IMR-90 (cell line): ENCODE measurements at regions of chr6 and their contacts with region 1.

Region 1: DNA sequence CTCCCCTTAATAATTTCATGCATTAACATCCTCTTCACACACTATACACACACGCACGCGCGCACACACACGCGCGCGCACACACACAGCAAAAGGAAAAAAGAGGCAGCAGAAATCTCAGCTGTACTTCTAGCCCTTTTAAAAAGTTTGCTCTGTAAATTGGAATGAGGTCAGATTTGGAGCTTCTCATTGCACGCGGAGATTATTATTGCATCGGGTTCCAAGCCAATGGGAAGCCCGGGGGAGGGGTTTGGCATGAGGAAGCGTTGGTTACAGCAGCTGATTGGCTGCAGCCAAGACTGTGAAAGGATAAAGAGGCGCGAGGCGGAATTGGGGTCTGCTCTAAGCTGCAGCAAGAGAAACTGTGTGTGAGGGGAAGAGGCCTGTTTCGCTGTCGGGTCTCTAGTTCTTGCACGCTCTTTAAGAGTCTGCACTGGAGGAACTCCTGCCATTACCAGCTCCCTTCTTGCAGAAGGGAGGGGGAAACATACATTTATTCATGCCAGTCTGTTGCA is at the start of gene SOX4:
- DNase-seq: peak; percentile 98
- ATAC-seq: peak; percentile 79
- H3K4me3 ChIP-seq: peak within 1 kb of the TSS; percentile 84
- H3K27ac ChIP-seq: peak within 1 kb of the TSS; percentile 90
- H3K4me1 ChIP-seq: no peaks in the 10 kb centered on the region
- H3K27me3 ChIP-seq: no peaks in the 10 kb centered on the region
- CTCF ChIP-seq: no peak
- POLR2A ChIP-seq: peak; percentile 98
- RAD21 ChIP-seq: no peak; the same call in 1 of the 2 replicates
- total RNA-seq, gene SOX4: 4.7 and 6.4 TPM in 2 replicates

Region 2: DNA sequence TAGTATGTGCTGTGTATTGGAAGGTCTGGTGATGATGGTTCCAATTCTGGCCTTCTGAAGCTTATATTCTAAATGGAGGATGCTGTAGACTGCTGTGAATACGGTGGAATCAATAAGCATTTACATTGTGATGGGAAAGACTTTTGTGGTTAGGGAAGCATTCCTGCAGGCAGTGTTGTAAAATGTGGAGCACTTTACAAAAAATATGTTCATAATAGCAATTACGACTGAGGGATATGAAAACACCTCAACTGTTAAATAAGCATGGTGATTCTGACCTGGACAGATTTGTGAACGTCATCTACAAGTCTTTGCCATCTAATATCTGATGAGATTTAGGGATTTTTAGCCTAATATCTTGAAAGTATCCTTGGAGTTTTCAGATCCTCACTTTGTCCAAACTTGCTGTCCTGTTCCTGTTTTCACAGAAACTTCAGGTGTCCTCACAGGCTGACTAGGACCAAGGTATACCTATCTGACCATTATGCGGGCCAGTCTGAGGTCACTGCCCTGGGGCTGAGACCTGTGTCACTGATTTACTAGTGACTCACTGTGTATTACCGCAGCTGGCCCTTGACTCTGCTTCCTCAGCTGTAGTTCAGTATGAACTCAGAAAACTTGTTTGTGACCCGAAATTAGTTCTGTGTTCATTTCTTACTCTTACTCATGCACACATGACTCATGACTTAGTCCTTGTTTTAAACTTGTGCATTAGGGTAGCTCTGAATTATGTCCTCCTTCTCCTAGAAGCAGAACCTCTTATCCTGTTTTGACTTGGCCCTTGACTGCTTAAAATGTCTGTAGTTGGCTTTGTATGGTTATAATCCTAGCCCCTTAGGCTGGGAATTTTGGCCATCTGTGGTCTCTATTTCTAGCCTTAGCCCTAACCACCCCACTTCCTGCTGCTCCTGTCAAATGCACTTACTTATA is 716.2 kb before region 1 on chr6:
- CTCF ChIA-PET with region 1: interaction called, 11 read pairs
- POLR2A ChIA-PET with region 1: no interaction called
- dilution Hi-C with region 1: no loop called
- in situ Hi-C with region 1: loop called (anchors 5 kb)
- intact Hi-C with region 1: loop called (anchors 1 kb)
- DNase-seq: peak; percentile 97
- ATAC-seq: peak; percentile 85
- H3K4me3 ChIP-seq: no peak overlapping the region
- H3K27ac ChIP-seq: peak overlapping the region; percentile 90
- H3K4me1 ChIP-seq: peaks cover 7% of the 10 kb centered on the region
- H3K27me3 ChIP-seq: no peaks in the 10 kb centered on the region
- CTCF ChIP-seq: no peak
- POLR2A ChIP-seq: no peak
- RAD21 ChIP-seq: peak; percentile 25; the same call in 1 of the 2 replicates

Region 3: DNA sequence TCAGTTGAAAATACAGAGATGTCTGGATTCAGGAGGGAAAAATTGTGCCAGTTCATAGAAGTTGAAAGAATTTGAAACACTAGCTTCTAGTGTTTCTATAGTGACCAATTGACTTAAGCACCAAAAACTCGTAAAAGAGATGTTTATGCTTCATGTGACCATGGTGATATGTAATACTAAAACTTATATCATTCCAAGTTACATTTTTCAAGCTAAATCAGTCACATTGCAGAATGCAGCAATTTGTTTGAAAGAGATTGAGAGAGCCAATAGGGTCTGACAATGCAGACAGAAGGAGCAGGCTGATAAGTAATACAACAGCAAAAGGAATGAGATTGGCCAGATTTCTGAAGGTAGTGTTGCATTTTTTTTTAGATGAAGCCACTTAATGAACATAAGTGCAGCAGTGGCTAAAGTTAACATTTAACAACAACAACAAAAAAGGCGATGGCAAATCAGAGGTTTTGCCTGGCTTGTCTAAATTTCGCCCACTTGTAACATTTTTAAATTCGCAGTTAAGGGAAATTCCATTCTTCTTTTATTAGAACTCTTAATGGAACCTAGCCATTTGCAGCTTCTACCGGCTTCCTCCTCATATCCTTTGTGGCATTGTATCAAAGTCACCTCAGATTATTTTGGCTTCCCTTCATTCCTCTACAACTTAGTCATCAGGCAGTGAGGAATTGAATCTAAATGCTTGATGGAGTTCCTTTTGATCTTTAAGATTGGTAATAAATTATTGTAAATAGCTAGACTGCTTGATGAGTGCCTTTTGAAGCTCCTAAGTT is 483.9 kb before region 1 on chr6:
- CTCF ChIA-PET with region 1: no interaction called
- POLR2A ChIA-PET with region 1: no interaction called
- dilution Hi-C with region 1: no loop called
- in situ Hi-C with region 1: no loop called
- intact Hi-C with region 1: loop called (anchors 10 kb)
- DNase-seq: peak; percentile 59
- ATAC-seq: peak; percentile 57
- H3K4me3 ChIP-seq: no peak overlapping the region
- H3K27ac ChIP-seq: no peak overlapping the region
- H3K4me1 ChIP-seq: peaks cover 6% of the 10 kb centered on the region
- H3K27me3 ChIP-seq: no peaks in the 10 kb centered on the region
- CTCF ChIP-seq: no peak
- POLR2A ChIP-seq: no peak
- RAD21 ChIP-seq: no peak

Region 4: GRCh38 chr6:21227486-21227885 is 366.0 kb before region 1 on chr6:
- CTCF ChIA-PET with region 1: no interaction called
- POLR2A ChIA-PET with region 1: no interaction called
- dilution Hi-C with region 1: no loop called
- in situ Hi-C with region 1: no loop called
- intact Hi-C with region 1: no loop called
- DNase-seq: peak; percentile 54
- ATAC-seq: 0 out of 2 replicates have a peak, but pooled peaks have one; percentile 32
- H3K4me3 ChIP-seq: no peak overlapping the region
- H3K27ac ChIP-seq: no peak overlapping the region
- H3K4me1 ChIP-seq: peaks cover 6% of the 10 kb centered on the region
- H3K27me3 ChIP-seq: no peaks in the 10 kb centered on the region
- CTCF ChIP-seq: no peak
- POLR2A ChIP-seq: no peak
- RAD21 ChIP-seq: no peak

Region 5: GRCh38 chr6:21769405-21769861 is 176.0 kb after region 1 on chr6:
- CTCF ChIA-PET with region 1: interaction called, 3 read pairs
- POLR2A ChIA-PET with region 1: interaction called, 3 read pairs
- dilution Hi-C with region 1: no loop called
- in situ Hi-C with region 1: no loop called
- intact Hi-C with region 1: loop called (anchors 5 kb)
- DNase-seq: peak; percentile 98
- ATAC-seq: peak; percentile 84
- H3K4me3 ChIP-seq: no peak overlapping the region
- H3K27ac ChIP-seq: peak overlapping the region; percentile 41; the same call in 1 of the 2 replicates
- H3K4me1 ChIP-seq: peaks cover 6% of the 10 kb centered on the region
- H3K27me3 ChIP-seq: no peaks in the 10 kb centered on the region
- CTCF ChIP-seq: no peak
- POLR2A ChIP-seq: peak; percentile 68; the same call in 1 of the 2 replicates
- RAD21 ChIP-seq: no peak

Region 6: GRCh38 chr6:21987501-21987957 is 394.1 kb after region 1 on chr6:
- CTCF ChIA-PET with region 1: no interaction called
- POLR2A ChIA-PET with region 1: interaction called, 3 read pairs
- dilution Hi-C with region 1: no loop called
- in situ Hi-C with region 1: no loop called
- intact Hi-C with region 1: loop called (anchors 2 kb)
- DNase-seq: peak; percentile 97
- ATAC-seq: peak; percentile 93
- H3K4me3 ChIP-seq: peak overlapping the region; percentile 5; the same call in 1 of the 2 replicates
- H3K27ac ChIP-seq: peak overlapping the region; percentile 83
- H3K4me1 ChIP-seq: peaks cover 4% of the 10 kb centered on the region
- H3K27me3 ChIP-seq: no peaks in the 10 kb centered on the region
- CTCF ChIP-seq: no peak
- POLR2A ChIP-seq: peak; percentile 70
- RAD21 ChIP-seq: peak; percentile 29

Region 7: GRCh38 chr6:22613695-22614094 is 1020.2 kb after region 1 on chr6:
- CTCF ChIA-PET with region 1: no interaction called
- POLR2A ChIA-PET with region 1: no interaction called
- dilution Hi-C with region 1: no loop called
- in situ Hi-C with region 1: no loop called
- intact Hi-C with region 1: loop called (anchors 5 kb)
- DNase-seq: peak; percentile 98
- ATAC-seq: peak; percentile 96
- H3K4me3 ChIP-seq: no peak overlapping the region
- H3K27ac ChIP-seq: no peak overlapping the region
- H3K4me1 ChIP-seq: peaks cover 9% of the 10 kb centered on the region
- H3K27me3 ChIP-seq: no peaks in the 10 kb centered on the region
- CTCF ChIP-seq: no peak
- POLR2A ChIP-seq: no peak
- RAD21 ChIP-seq: no peak